Activated CD4-positive, alpha-beta T cell treated with anti-CD3 and anti-CD28 coated beads for 36 hours (primary cell): ENCODE measurements at regions of chr12 and their contacts with region 1.

Region 1: DNA sequence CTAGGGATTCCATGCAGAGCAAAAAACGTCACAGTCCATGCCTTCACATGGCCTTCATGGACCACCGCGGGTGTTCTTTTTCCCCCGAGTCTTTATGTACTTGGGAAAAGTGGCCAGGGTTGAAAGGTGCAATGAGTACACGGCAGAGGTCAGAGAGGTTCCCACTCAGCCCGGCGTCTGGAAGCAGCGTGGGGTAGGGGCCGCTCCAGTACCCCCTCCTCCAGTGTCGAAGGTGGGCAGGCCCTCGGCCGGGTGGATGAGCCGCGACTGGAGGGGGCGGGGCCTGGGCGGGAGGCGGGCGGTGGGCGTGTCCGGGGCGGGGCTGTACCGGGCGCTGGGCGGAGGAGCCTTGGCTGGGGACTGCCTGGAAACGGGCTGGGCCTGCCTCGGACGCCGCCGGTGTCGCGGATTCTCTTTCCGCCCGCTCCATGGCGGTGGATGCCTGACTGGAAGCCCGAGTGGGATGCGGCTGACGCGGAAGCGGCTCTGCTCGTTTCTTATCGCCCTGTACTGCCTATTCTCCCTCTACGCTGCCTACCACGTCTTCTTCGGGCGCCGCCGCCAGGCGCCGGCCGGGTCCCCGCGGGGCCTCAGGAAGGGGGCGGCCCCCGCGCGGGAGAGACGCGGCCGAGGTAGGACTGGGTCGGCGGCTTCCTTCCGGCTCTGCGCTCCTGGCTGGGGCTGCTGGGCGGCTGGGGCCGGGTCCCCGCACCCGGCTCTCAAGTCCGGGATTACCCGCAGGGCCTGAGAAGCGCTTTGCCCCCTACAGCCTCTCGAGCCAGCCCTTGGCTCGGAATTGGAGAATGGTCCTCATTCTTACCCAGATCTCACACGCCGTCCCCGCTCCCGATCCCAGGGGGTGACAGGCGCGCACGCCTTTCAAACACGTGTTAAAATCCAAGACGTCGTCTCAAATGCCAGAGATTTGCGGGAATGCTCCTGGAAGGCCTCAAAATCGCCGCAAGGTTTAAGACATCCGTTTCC is at the start of gene RXYLT1:
- DNase-seq: peak; percentile 92
- ATAC-seq: peak; percentile 94
- H3K4me3 Mint-ChIP-seq: peak within 1 kb of the TSS; percentile 94
- H3K27ac Mint-ChIP-seq: peak within 1 kb of the TSS; percentile 95
- H3K4me1 Mint-ChIP-seq: peaks cover 10% of the 10 kb centered on the region
- H3K27me3 Mint-ChIP-seq: no peaks in the 10 kb centered on the region
- total RNA-seq, gene RXYLT1: 14.8 to 15.6 TPM

Region 2: DNA sequence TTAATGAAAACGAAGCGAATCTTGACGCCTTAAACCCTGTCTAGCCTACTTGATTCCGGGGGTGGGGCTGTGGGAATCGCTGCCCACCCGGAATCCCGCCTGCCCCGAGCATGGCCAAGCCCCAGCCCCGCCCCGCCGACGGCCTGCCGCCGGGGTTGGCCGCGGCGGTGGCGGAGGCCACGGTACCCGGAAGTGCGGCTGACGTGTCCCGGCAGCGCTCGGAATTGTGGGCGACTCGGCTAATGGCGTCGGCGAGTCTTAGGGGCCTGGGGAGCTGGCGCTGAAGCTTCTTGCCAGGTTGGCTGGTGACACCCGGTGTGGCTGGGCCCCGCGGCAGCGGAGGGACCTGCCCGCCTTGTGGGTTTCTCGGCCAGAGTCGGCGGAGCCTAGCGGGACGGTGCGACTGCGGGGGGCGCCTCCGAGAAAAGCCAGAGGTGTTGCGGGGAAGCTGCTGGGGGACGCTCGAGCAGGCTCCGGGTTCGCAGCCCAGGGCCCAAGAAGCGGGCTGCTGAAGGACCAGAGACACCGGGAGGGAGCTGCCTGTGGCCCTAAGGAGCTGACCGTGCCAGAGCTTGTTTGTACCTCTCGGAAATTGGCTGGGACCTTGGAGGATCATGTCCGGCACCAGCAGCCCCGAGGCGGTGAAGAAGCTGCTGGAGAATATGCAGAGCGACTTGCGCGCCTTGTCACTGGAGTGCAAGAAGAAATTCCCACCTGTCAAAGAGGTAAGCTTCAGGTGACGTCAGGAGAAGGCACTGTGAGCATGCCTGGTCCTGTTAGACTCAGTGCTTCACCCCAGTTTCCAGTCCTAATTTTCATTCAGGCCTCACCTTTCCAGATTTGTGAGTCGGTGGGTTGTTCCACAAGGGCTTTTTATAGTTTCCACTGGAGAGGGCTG is 1312.9 kb before region 1 on chr12 and contains the start of gene MON2:
- CTCF ChIA-PET with region 1: no interaction called
- POLR2A ChIA-PET with region 1: no interaction called
- intact Hi-C with region 1: loop called in 1 of 2 experiments (anchors 1 kb)
- DNase-seq: peak; percentile 92
- ATAC-seq: peak; percentile 97
- H3K4me3 Mint-ChIP-seq: peak within 1 kb of the TSS; percentile 92
- H3K27ac Mint-ChIP-seq: peak within 1 kb of the TSS; percentile 93
- H3K4me1 Mint-ChIP-seq: peaks cover 20% of the 10 kb centered on the region
- H3K27me3 Mint-ChIP-seq: peaks cover 4% of the 10 kb centered on the region
- total RNA-seq, gene MON2: 26.9 to 31.3 TPM

Region 3: DNA sequence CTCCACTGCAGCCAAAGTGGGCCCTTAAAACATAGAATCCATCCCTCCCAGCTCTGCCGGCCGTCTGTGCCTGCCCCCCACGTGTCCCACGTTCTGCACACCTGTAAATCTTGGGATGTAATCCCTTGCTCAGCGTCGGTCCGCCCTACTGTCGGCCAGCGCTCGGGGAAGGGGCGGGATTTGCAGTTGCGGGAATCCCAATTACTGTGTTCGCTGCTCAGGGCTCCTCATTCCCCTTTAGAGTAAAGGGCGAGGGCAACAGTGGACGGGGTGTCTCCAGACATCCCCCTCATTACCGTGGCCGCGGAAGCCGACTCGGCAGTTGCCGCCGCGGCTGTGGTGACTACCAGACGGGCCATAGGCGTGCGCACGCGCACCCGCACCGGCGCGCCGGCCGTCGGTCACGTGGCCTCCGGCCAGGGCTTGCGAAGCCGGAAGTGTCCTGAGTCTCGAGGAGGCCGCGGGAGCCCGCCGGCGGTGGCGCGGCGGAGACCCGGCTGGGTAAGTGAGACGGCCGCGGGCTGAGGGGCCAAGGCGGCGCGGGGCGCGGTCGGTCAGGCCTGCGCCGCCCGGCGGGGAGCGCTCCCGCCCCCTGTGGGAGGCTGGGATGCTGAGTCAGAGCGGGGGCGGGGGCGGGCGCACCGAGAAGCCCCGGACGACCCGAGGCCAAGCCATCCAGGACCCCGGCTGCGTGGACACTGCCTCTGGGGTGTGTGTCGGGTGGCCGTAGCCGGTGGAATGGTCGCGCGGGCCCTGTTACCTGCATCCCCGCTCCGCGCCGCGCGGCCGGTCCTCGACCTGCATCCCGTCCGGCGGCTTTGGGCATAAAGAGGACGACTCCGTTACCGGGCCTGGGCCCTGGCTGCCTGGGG is 672.1 kb after region 1 on chr12 and contains the start of gene TBK1:
- CTCF ChIA-PET with region 1: no interaction called
- POLR2A ChIA-PET with region 1: no interaction called
- intact Hi-C with region 1: loop called (anchors 5 kb)
- DNase-seq: peak; percentile 75
- ATAC-seq: peak; percentile 64
- H3K4me3 Mint-ChIP-seq: peak within 1 kb of the TSS; percentile 89
- H3K27ac Mint-ChIP-seq: peak within 1 kb of the TSS; percentile 98
- H3K4me1 Mint-ChIP-seq: peaks cover 40% of the 10 kb centered on the region
- H3K27me3 Mint-ChIP-seq: no peaks in the 10 kb centered on the region
- total RNA-seq, gene TBK1: 14.0 to 15.4 TPM